Activated CD4-positive, alpha-beta memory T cell treated with anti-CD3 and anti-CD28 coated beads for 36 hours (primary cell): ENCODE measurements at regions of chr5 and their contacts with region 1.

Region 1: GRCh38 chr5:39231705-39232525 is 12.6 kb upstream of the FYB1 start:
- DNase-seq: peak; percentile 75
- H3K4me3 Mint-ChIP-seq: peak overlapping the region; percentile 70
- H3K27ac Mint-ChIP-seq: peak overlapping the region; percentile 97
- H3K4me1 Mint-ChIP-seq: peaks cover 14% of the 10 kb centered on the region
- H3K27me3 Mint-ChIP-seq: no peaks in the 10 kb centered on the region

Region 2: DNA sequence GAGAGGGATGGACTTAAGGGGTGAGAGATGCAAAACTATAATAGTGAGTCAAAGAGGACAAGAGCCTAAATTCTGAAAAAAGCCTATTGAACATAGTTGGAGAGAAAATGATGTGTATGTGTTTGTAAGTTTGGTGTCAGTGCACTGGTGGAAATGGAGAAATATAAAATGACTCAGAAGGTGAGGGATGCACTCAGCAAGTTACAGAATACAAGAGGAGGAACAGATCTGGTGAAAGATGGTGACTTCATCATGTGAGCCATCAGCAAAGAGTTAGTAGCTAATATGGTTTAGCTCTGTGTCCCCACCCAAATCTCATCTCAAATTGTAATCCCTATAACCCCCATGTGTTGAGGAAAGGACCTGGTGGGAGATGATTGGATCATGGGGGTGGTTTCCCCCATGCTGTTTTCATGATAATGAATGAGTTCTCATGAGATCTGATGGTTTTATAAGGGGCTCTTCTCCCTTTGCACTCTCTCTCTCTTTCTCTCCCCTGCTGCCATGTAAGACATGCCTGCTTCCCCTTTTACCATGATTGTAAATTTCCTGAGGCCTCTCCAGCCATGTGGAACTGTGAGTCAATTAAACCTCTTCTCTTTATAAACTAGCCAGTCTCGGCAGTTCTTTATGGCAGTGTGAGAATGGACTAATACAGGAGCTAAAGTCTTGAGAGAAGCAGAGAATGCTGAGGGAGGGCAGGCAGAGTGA is 17.8 kb after region 1 on chr5:
- CTCF ChIA-PET with region 1: interaction called, 3 read pairs
- POLR2A ChIA-PET with region 1: interaction called, 4 read pairs
- intact Hi-C with region 1: loop called (anchors 2 kb)
- DNase-seq: no peak
- H3K4me3 Mint-ChIP-seq: no peak overlapping the region
- H3K27ac Mint-ChIP-seq: peak overlapping the region; percentile 0
- H3K4me1 Mint-ChIP-seq: peaks cover 4% of the 10 kb centered on the region
- H3K27me3 Mint-ChIP-seq: peaks cover 2% of the 10 kb centered on the region

Region 3: GRCh38 chr5:39256477-39257235 is 24.7 kb after region 1 on chr5:
- CTCF ChIA-PET with region 1: no interaction called
- POLR2A ChIA-PET with region 1: interaction called, 3 read pairs
- intact Hi-C with region 1: loop called (anchors 2 kb)
- DNase-seq: no peak
- H3K4me3 Mint-ChIP-seq: peak overlapping the region; percentile 2
- H3K27ac Mint-ChIP-seq: peak overlapping the region; percentile 21
- H3K4me1 Mint-ChIP-seq: peaks cover 15% of the 10 kb centered on the region
- H3K27me3 Mint-ChIP-seq: no peaks in the 10 kb centered on the region

Region 4: GRCh38 chr5:39274398-39275085 is 42.6 kb after region 1 on chr5:
- CTCF ChIA-PET with region 1: interaction called, 3 read pairs
- POLR2A ChIA-PET with region 1: no interaction called
- intact Hi-C with region 1: loop called (anchors 1 kb)
- DNase-seq: no peak
- H3K4me3 Mint-ChIP-seq: peak overlapping the region; percentile 74
- H3K27ac Mint-ChIP-seq: peak overlapping the region; percentile 95
- H3K4me1 Mint-ChIP-seq: peaks cover 53% of the 10 kb centered on the region
- H3K27me3 Mint-ChIP-seq: no peaks in the 10 kb centered on the region